GM18951 (cell line): ENCODE measurements at regions of chr1 and their contacts with region 1.

Region 1: DNA sequence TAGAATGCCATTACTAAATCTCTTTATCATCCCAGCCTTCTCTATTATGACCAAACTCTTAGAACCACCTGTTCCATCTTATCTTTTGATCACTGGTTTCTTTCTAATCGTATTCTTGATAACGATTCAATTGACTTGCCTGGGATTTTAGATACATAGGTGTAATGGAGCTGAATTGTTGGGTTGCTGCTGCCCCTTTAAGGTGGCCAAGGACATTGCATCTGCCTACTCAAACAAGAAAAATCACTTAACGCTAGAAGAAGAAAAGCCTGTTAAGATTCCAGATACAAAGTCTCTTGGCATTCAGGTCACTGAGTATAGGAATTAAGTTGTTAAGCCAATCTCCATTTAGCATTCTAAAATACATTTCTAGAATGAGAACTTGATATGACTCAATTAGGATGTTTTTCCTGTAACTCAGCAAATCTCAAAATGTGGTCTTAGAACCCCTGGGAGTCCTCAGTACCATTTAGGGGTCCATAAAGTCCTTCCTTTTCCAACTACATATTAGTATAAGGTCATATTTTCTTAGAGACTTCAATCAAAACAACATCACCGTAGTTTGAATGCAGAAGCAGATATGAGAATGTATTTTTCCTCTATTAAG is 12.4 kb downstream of the NEXN start:
- POLR2A ChIP-seq: no peak

Region 2: DNA sequence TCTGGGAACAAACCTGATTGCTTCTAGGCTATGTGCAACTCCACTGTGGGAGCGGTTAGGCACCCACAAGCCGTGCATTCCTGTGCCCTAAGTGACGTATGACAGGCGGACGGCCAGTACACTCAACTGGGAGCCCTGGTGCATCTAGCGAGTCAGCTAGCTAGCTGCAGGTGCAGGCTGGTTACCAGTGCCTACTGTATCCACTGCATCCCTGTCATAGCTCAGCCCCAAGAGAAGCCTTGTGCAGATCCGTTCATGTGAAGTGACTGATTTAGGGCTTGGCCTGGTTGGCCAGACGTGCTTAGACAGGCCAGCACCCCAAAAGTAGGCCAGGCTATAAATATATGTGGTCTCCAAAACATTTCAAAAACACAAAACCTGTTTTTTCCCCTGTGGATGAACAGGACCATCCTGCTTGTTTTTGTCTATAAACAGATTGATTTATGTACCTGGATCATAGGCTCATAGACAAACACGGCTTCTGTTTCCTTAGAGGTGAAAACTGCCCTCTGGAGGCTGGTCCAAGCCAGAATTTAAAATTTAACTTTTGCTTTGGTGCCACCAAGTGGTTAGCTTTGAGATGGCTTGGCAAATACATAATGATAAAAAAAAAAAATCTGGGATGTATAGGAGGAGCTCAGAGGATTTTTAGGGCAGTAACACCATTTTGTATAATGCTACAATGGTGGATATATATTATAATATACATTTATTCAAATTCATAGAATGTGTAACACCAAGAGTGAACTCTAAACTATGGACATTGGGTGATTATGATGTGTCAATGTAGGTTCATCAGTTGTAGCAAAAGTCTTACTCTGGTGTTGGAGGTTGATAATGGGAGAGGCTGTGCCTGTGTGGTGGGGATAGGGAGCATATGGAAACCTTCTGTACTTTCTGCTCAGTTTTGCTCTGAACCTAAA is 213.5 kb after region 1 on chr1:
- in situ Hi-C with region 1: loop called (anchors 25 kb)
- POLR2A ChIP-seq: no peak